Vagina (tissue), 2 donors: ENCODE measurements at regions of chr17 and their contacts with region 1.

Region 1: GRCh38 chr17:60421273-60421934 is 885 bp upstream of the CHCT1 start:
- DNase-seq: no peak
- H3K4me3 ChIP-seq: peak overlapping the region; percentile 45 to 48
- H3K27ac ChIP-seq: peak overlapping the region; percentile 42
- H3K4me1 ChIP-seq: peaks cover 12% of the 10 kb centered on the region
- H3K27me3 ChIP-seq: no peaks in the 10 kb centered on the region
- CTCF ChIP-seq: peak; percentile 91 to 100 (median 91)
- POLR2A ChIP-seq: no peak

Region 2: GRCh38 chr17:60525685-60526514 is 104.5 kb after region 1 on chr17 and contains the start of gene APPBP2:
- intact Hi-C with region 1: no loop called
- DNase-seq: peak in 1 of 2 donors; percentile 91
- H3K4me3 ChIP-seq: peak within 1 kb of the TSS; percentile 93 to 94
- H3K27ac ChIP-seq: peak within 1 kb of the TSS; percentile 98
- H3K4me1 ChIP-seq: peaks cover 42% of the 10 kb centered on the region
- H3K27me3 ChIP-seq: no peaks in the 10 kb centered on the region
- CTCF ChIP-seq: no peak
- POLR2A ChIP-seq: peak in 1 of 2 donors; percentile 88
- total RNA-seq, gene APPBP2: 23.6 TPM

Region 3: DNA sequence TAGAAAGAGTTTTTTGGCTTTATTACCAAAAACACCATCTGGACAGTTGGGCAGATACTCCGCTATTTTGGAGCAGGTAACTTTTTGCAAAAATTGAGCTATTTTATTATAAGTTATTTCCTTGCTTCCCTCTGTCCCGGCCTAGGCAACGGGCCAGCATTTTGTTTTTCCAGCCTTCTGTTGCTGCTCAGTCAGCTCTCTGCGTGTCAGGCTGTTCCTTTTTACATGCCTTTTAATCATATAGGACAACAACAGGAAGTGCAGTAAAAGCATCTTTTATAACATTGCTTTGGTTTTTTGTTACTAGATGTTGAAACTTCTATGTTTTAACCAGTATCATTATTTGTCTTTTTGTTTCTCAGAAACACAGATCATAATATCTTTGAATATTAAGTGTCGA is 208.9 kb after region 1 on chr17:
- intact Hi-C with region 1: loop called (anchors 10 kb)
- DNase-seq: no peak
- H3K4me3 ChIP-seq: no peak overlapping the region
- H3K27ac ChIP-seq: peak overlapping the region; percentile 40
- H3K4me1 ChIP-seq: no peaks in the 10 kb centered on the region
- H3K27me3 ChIP-seq: no peaks in the 10 kb centered on the region
- CTCF ChIP-seq: no peak
- POLR2A ChIP-seq: no peak